Tibial artery (tissue), 4 donors: ENCODE measurements at regions of chr10 and their contacts with region 1.

Region 1: GRCh38 chr10:13371897-13372470 is 23.9 kb upstream of the SEPHS1 start:
- DNase-seq: peak; percentile 61 to 70
- H3K4me3 ChIP-seq: no peak overlapping the region
- H3K27ac ChIP-seq: no peak overlapping the region
- H3K4me1 ChIP-seq: no peaks in the 10 kb centered on the region
- H3K27me3 ChIP-seq: peaks cover 0 to 11% of the 10 kb centered on the region in 2 donors
- CTCF ChIP-seq: peak; percentile 84 to 87

Region 2: GRCh38 chr10:12960334-12960898 is 411.6 kb before region 1 on chr10:
- intact Hi-C with region 1: no loop called
- DNase-seq: peak; percentile 51 to 89
- H3K4me3 ChIP-seq: peak overlapping the region; percentile 24 to 27
- H3K27ac ChIP-seq: peak overlapping the region; percentile 80 to 84
- H3K4me1 ChIP-seq: peaks cover 0 to 63% (median 41%) of the 10 kb centered on the region in 4 donors
- H3K27me3 ChIP-seq: no peaks in the 10 kb centered on the region
- CTCF ChIP-seq: no peak

Region 3: DNA sequence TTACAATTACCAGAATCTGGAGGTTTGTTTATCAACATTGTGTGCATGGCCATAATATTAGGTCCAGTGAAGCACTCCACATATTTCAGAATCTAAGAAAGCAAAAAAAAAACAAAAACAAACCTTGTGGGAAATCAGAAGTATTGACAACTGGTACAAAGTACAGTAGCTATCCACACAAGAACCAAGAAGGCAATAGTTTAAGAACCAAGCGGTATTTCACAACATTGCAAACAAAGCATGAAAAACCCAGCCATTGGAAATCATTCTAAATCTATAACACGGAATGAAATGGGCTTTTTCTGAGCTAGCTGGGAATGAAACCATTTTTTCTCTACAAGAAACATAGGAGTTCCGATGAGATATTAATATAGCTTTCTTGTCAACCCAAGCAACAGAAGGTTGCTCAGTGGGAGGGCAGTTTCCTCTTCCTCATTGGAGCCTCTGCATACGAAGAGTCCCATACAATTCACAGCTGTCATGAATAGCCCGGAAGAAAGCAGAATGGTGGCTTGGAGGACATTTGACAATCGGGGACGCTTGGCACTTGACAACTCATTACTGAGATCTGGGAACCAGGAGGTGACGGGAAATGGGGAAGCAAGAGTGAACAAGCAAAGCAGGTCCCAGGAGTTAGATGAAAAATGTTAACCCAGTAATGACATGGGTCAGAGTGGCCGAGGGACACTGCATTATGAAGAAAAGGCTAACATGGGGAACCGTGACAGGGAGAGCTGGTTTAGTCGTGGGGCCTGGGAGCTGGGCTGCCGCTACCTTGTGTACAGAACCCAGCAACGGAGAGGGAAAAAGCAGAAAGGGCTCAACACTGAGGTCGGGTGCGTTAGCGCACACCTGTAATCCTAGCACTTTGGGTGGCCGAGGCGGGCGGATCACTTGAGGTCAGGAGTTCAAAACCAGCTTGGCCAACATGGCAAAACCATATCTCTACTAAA is 79.9 kb before region 1 on chr10:
- intact Hi-C with region 1: no loop called
- DNase-seq: no peak
- H3K4me3 ChIP-seq: no peak overlapping the region
- H3K27ac ChIP-seq: no peak overlapping the region
- H3K4me1 ChIP-seq: no peaks in the 10 kb centered on the region
- H3K27me3 ChIP-seq: no peaks in the 10 kb centered on the region
- CTCF ChIP-seq: no peak

Region 4: GRCh38 chr10:13439313-13440184 is 67.6 kb after region 1 on chr10:
- intact Hi-C with region 1: loop called (anchors 5 kb)
- DNase-seq: no peak
- H3K4me3 ChIP-seq: peak overlapping the region in 1 of 2 donors; percentile 35
- H3K27ac ChIP-seq: no peak overlapping the region
- H3K4me1 ChIP-seq: peaks cover 0 to 15% (median 13%) of the 10 kb centered on the region in 4 donors
- H3K27me3 ChIP-seq: peaks cover 0 to 19% of the 10 kb centered on the region in 2 donors
- CTCF ChIP-seq: no peak

Region 5: DNA sequence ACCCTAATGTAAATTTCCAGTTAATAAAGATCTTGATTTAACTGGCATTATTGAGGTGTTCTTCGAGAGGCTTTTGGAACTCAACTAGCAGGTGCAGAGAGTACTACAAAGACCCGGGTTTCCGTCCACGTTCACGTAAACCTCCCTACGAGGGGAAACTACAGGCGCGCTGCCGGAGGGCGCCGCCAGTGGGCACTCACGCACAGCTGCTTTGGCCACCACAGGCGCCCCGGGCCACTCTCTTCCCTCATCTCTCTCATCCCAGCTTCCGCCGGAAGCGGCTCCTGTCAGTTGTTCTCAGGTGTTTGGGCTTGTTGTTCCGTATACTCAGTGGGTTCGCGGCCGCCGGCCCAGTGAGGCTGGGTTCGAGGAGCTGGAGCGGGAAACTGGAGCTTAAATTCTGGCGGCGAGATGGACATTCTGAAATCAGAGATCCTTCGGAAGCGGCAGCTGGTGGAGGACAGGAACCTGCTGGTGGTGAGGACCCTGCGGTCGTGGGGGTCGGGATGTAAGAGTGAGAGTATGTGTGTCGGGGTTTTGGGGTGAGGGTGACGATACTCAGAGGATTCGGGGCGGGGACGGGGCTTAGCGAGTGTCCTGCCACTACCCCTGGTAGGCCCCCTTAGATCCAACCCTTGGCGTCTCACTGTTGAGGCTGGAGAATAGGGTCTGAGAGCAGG is 214.8 kb after region 1 on chr10 and contains the start of gene PRPF18:
- intact Hi-C with region 1: loop called (anchors 5 kb)
- DNase-seq: peak; percentile 94
- H3K4me3 ChIP-seq: peak within 1 kb of the TSS; percentile 80 to 87
- H3K27ac ChIP-seq: peak within 1 kb of the TSS; percentile 70 to 76
- H3K4me1 ChIP-seq: peaks cover 0 to 22% (median 11%) of the 10 kb centered on the region in 4 donors
- H3K27me3 ChIP-seq: peaks cover 0 to 7% of the 10 kb centered on the region in 2 donors
- CTCF ChIP-seq: peak; percentile 92 to 98